Cardiac septum (tissue), 1 donor: ENCODE measurements at regions of chr16 and their contacts with region 1.

Region 1: DNA sequence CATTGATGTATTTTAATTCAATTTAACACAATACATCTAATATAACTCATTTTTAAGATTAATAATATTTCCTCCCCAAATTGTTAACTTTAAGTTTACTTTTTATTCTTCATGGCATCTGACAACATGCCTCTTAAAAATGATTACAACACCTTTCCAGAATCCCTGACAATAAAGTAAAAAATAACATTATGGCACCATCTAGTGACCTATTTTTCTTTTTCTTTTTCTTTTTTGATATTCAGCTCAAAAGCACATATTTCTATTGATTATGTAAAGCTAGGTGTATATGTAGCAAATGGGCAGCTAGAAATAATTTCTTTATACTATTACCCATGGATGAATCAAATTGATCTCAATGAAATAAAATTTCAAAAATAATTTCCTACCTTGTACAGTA is 834.3 kb upstream of the CDH8 start:
- DNase-seq: no peak

Region 2: GRCh38 chr16:62817034-62817433 is 53.5 kb before region 1 on chr16:
- intact Hi-C with region 1: loop called (anchors 10 kb)
- DNase-seq: no peak